A549 (cell line): ENCODE measurements at regions of chr2 and their contacts with region 1.

Region 1: DNA sequence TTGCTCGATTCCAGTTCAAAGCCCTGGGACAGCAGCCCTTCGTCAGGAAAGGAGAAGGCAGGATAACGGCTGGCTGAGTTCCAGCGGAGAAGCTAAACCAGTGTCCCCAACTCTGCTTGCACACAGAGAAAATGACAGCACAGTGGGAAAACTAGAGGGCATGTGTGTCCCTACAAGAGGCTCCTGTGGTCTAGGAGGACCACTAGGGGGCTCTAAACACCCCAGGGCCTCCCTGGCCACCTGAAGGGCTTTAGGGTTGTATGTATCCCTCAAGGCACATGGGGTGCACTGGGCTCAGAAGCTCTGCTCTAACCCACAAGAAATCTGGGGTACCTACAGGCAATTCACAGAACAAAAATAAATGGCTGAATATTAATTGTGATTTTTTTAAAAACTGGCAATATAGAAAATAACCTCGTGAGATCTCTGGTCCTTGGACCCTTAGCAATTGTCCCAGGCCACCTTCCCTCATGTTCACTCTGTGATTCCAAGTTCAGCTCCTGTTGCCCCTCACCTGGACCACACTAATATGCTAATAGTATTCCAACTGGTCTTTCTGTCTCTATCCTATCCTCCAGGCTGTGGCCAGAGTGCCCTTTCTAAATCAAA is 17.5 kb downstream of the STAT1 start:
- DNase-seq: peak; percentile 54 to 74
- ATAC-seq: peak; percentile 93 to 95
- H3K4me3 ChIP-seq: no peak overlapping the region
- H3K27ac ChIP-seq: peak overlapping the region in 1 of 2 experiments; percentile 34; a peak in 2 of 6 replicates
- H3K4me1 ChIP-seq: no peaks in the 10 kb centered on the region
- CTCF ChIP-seq: peak; percentile 72
- EP300 ChIP-seq: no peak
- POLR2A ChIP-seq: no peak
- RAD21 ChIP-seq: peak; percentile 55 to 56; a peak in 4 of 5 replicates

Region 2: GRCh38 chr2:190940454-190940853 is 56.0 kb before region 1 on chr2:
- CTCF ChIA-PET with region 1: no interaction called
- POLR2A ChIA-PET with region 1: no interaction called
- DNase-seq: no peak
- ATAC-seq: no peak
- H3K4me3 ChIP-seq: no peak overlapping the region
- H3K27ac ChIP-seq: peak overlapping the region in 1 of 2 experiments; percentile 12; a peak in 2 of 6 replicates
- H3K4me1 ChIP-seq: peaks cover 76% of the 10 kb centered on the region
- CTCF ChIP-seq: no peak
- EP300 ChIP-seq: no peak
- POLR2A ChIP-seq: no peak
- RAD21 ChIP-seq: no peak

Region 3: GRCh38 chr2:190986221-190986953 is 10.1 kb before region 1 on chr2:
- CTCF ChIA-PET with region 1: interaction called, 16 read pairs
- POLR2A ChIA-PET with region 1: no interaction called
- DNase-seq: no peak
- ATAC-seq: no peak; a peak in 3 of 6 replicates
- H3K4me3 ChIP-seq: no peak overlapping the region
- H3K27ac ChIP-seq: no peak overlapping the region
- H3K4me1 ChIP-seq: no peaks in the 10 kb centered on the region
- CTCF ChIP-seq: no peak
- EP300 ChIP-seq: no peak
- POLR2A ChIP-seq: no peak
- RAD21 ChIP-seq: no peak